ENCODE measurements at regions of chr20 and their contacts with region 1.

Region 1: GRCh38 chr20:45362804-45363610 is at the start of gene SYS1:
- DNase-seq: peak; percentile 90 to 99
- H3K4me3 ChIP-seq: peak within 1 kb of the TSS; percentile 73 to 75
- H3K27ac ChIP-seq: peak within 1 kb of the TSS; percentile 95 to 96
- H3K4me1 ChIP-seq: peaks cover 0 to 26% of the 10 kb centered on the region in 2 donors
- H3K27me3 ChIP-seq: no peaks in the 10 kb centered on the region
- CTCF ChIP-seq: peak; percentile 87 to 90 (median 88)
- total RNA-seq, gene SYS1: 27.4 TPM

Region 2: DNA sequence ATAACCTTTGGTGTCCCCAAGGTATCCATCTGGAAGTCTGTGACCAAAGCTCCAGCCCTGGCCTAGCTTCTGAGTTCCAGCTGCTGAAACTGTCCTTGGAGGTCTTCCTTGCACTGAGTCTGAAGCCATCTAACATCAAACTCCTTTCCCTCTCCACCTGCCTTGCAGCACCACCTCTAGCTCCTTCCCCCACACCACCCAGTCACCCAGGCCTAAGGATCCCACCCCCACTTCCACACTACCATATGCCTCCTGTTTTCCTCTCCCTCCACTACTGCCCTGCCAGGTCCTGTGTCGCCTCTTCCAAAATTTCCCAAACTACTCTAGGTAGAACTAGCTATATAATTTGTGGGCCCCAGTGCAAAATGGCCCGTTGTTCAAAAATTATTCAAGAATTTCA is 44.1 kb before region 1 on chr20:
- intact Hi-C with region 1: loop called (anchors 2 kb)
- DNase-seq: no peak
- H3K4me3 ChIP-seq: no peak overlapping the region
- H3K27ac ChIP-seq: no peak overlapping the region
- H3K4me1 ChIP-seq: no peaks in the 10 kb centered on the region
- H3K27me3 ChIP-seq: no peaks in the 10 kb centered on the region
- CTCF ChIP-seq: no peak

Region 3: GRCh38 chr20:45347936-45348778 is 14.8 kb before region 1 on chr20 and contains the start of gene SDC4:
- intact Hi-C with region 1: loop called (anchors 1 kb)
- DNase-seq: peak in 1 of 2 donors; percentile 85
- H3K4me3 ChIP-seq: peak within 1 kb of the TSS; percentile 60 to 80
- H3K27ac ChIP-seq: peak within 1 kb of the TSS; percentile 93 to 96
- H3K4me1 ChIP-seq: peaks cover 30 to 33% of the 10 kb centered on the region in 2 donors
- H3K27me3 ChIP-seq: no peaks in the 10 kb centered on the region
- CTCF ChIP-seq: no peak
- total RNA-seq, gene SDC4: 63.8 TPM

Region 4: DNA sequence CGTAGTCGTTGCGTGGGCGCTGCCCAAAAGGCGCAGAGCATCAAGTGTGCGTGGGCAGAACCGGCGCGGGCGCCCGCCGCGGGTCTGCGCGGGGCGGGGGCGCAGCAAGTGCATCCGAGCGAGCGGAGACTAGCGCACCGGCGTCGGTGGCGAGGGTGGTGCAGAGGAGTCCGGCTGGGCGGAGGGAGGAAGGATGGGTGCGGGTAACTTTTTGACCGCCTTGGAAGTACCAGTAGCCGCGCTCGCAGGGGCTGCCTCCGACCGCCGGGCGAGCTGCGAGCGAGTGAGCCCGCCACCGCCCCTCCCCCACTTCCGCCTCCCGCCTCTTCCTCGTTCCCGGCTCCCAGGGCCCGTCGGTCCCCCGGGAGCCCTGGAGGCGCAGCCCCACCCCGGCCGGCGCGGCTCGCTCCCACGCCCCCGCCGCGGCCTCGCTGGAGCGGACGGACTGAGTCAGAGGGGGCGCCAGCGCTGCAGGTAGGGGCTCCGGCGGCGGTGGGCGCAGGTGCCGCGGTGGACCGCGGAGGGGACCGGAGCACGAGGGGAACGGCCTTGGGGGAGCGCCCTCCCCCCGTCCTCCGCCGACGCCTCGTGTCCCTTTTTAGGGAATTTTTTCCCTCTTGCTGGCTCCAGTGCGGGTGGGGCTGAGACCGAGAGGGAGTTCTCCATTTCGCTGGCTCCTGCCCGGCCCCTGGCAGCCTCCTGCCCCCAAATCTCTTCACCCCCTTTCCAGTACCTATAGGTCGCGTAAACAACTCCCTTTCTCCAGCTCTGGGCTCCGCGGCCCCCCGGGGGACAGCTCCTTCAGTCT is 43.5 kb after region 1 on chr20:
- intact Hi-C with region 1: loop called (anchors 2 kb)
- DNase-seq: peak; percentile 38 to 90
- H3K4me3 ChIP-seq: peak overlapping the region; percentile 81 to 98
- H3K27ac ChIP-seq: peak overlapping the region; percentile 95 to 99
- H3K4me1 ChIP-seq: peaks cover 9 to 20% of the 10 kb centered on the region in 2 donors
- H3K27me3 ChIP-seq: no peaks in the 10 kb centered on the region
- CTCF ChIP-seq: no peak

Region 5: DNA sequence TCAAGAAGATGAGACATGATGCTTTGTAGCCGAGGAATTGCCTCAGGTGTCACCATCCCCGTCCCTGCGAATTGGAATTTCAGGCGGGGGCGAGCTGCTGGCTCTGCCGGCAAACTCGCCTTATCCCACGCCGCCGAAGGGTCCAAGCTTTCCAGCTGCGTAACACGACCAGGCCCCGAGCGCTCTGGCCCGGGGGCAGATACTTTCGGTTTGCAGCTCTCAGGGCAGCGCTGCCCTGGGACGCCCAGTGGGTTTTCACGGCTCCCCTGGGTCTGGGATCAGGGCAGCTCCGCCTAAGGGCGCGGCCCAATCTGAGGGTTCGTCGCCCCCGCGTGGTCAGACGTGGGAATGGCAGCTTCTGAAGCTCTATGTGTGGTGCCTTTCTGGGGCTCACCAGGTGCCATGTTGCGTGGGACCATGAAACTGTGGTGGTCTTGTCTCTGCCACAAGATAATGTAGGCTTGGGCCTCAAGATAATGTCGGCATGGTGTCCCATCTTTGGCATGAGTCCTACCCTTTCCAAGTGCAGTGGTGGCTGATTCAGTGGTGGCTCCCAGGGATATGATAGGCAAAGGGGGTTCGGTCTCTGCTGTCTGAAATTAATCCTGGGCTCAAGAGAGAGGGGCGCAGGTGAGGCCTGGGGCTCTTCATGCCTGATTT is 73.9 kb after region 1 on chr20:
- intact Hi-C with region 1: loop called (anchors 1 kb)
- DNase-seq: peak; percentile 43 to 94
- H3K4me3 ChIP-seq: peak overlapping the region; percentile 60 to 86
- H3K27ac ChIP-seq: peak overlapping the region; percentile 84 to 92
- H3K4me1 ChIP-seq: peaks cover 0 to 3% of the 10 kb centered on the region in 2 donors
- H3K27me3 ChIP-seq: no peaks in the 10 kb centered on the region
- CTCF ChIP-seq: peak; percentile 92 to 99 (median 94)